Left colon (tissue), 2 donors: ENCODE measurements at regions of chr16 and their contacts with region 1.

Region 1: DNA sequence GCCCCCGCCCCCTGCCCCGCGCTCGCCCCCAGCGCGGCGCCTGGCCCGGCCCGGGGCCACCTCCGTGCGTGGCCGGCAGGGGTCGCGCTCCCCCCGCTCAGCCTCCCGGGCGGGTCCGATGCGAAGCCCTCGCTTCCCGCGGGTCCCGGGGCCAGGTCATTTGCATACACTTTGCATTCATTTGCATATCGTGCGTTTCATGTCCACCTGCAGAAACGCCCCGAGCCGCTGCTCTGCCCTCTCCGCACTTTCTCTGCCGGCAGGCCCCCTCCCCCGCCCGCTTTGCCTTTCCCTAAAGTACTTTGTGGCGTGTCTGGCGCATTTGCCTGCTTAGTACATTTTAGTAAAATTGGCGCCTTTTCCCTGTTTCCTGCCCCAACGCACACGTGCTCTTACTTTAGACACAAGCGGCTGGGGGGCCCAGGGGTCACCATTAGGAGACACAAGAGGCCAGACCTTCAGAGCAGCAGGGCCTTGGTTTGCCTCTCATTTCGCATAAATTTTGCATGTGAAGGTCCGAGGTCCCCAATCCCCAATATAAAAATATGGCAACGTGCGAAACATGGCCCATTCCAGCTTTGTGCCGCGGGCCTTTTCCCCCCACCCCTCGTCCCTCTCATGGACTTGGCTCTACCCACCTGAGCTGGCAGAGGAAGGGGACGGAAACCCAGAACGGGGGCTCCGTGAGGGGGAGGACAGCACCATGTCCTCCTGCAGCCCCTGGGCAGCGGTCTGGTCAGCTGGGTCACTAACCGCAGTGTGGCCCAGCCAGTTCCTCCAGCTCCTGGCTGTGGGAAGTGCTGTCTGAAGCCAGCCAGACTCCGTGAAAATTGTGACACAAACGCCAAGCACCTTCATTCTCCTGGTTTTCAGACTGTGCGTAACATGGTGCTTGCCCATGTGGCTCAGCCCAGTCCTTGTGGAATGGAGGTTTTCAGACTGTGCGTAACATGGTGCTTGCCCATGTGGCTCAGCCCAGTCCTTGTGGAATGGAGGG is 34.8 kb downstream of the CBFA2T3 start:
- DNase-seq: peak in 1 of 2 donors; percentile 72
- ATAC-seq: peak; percentile 59

Region 2: DNA sequence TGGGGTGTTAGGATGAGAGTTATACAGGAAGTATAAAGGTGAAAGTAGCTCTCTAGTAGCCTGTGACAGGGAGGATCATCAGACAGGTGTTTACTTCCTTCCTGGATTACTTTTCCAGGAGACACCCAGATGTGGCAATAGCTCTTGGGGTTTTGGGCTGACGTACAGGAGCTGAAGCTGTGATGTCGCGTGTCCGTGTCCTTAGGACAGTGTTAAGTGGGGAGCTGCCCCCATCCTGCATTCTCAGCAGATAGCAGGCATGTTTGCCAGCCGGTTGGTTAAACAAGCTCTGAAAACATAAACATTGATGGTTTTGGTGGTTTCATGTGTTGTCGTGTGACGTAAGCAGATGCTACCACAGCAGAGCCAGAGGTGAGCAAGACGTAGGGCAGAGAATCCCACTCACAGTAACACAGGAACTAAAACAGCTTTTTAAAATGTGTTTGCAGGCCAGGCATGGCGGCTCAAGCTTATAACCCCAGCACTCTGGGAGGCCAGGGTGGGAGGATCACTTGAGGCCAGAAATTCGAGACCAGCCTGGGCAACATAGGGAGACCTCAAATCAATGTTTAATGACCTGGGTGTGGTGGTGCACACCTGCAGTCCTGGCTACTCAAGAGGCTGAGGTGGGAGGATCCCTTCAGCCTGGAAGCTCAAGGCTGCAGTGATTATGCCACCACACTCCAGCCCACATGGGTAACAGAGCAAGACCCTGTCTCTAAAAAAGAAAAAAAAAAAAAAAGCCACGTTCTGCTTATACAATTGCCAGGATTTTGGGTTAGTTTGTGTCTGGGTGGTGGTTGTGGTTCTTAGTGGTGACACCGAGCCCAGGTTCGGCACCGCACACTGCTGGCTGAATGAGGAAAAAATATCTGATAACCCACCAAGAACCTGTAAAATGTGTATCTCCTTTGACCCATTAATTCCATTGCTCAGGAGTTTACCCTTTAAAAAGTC is 322.1 kb before region 1 on chr16:
- intact Hi-C with region 1: no loop called
- DNase-seq: no peak
- ATAC-seq: peak; percentile 20

Region 3: GRCh38 chr16:89217388-89218191 is 275.4 kb after region 1 on chr16 and contains the start of gene ZNF778:
- intact Hi-C with region 1: loop called in 1 of 2 experiments (anchors 10 kb)
- DNase-seq: peak; percentile 77 to 87
- ATAC-seq: peak; percentile 91
- total RNA-seq, gene ZNF778: 4.4 to 7.0 TPM